GM23248 (cell line): ENCODE measurements at regions of chr1 and their contacts with region 1.

Region 1: GRCh38 chr1:79497193-79497773 is 490.8 kb upstream of the ADGRL4 start:
- DNase-seq: peak; percentile 59
- H3K4me3 ChIP-seq: no peak overlapping the region
- H3K27ac ChIP-seq: no peak overlapping the region
- H3K4me1 ChIP-seq: no peaks in the 10 kb centered on the region
- H3K27me3 ChIP-seq: no peaks in the 10 kb centered on the region; the same call in 1 of the 2 replicates

Region 2: DNA sequence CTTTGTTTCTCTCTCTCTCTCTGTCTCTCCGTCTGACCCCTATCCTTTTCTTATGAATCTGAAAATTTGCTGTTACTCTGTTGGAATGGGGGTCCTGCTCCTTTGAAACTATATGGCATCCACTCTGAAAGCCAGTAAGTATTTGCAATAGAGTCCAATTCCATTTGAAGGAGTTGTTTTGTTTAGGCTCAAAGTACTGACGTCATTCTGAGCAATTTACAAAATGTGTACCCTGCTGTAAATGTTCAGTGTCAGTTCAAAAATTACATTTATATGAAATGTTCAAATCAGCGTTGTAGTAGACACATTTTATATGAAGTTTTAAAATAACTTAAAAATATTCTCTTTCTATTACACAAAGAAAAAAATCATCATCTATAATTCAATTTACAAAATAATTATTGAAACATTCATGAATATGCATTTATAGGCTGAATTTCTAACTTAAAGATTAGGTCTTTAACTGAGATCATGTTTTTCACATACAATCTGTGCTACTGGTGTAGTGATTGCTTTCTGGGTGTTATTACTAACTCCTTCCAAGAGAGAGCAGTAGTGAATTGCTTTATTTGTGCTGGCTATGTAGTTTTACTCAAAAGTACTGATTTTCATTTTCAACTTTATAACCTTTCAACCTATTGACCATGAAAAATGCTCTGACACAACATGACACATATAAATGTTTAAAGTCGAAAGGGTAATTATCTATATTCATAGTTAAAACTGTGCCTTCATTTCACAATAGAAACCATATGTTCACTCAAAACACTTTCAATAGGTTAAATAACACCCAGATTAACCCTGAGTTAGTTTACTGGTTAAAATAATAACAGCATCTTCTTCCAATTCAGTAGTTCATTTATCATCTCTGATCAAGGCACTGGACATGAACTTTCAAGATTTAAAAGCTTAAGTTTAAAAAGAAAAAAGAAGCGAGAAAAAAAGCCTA is 237.6 kb before region 1 on chr1:
- in situ Hi-C with region 1: loop called (anchors 25 kb)
- DNase-seq: peak; percentile 72
- H3K4me3 ChIP-seq: no peak overlapping the region
- H3K27ac ChIP-seq: no peak overlapping the region
- H3K4me1 ChIP-seq: peaks cover 4% of the 10 kb centered on the region
- H3K27me3 ChIP-seq: no peaks in the 10 kb centered on the region

Region 3: GRCh38 chr1:80075351-80075750 is 578.1 kb after region 1 on chr1:
- in situ Hi-C with region 1: no loop called
- DNase-seq: no peak
- H3K4me3 ChIP-seq: no peak overlapping the region
- H3K27ac ChIP-seq: no peak overlapping the region
- H3K4me1 ChIP-seq: no peaks in the 10 kb centered on the region
- H3K27me3 ChIP-seq: no peaks in the 10 kb centered on the region